MCF 10A (cell line): ENCODE measurements at regions of chr6 and their contacts with region 1.

Region 1: DNA sequence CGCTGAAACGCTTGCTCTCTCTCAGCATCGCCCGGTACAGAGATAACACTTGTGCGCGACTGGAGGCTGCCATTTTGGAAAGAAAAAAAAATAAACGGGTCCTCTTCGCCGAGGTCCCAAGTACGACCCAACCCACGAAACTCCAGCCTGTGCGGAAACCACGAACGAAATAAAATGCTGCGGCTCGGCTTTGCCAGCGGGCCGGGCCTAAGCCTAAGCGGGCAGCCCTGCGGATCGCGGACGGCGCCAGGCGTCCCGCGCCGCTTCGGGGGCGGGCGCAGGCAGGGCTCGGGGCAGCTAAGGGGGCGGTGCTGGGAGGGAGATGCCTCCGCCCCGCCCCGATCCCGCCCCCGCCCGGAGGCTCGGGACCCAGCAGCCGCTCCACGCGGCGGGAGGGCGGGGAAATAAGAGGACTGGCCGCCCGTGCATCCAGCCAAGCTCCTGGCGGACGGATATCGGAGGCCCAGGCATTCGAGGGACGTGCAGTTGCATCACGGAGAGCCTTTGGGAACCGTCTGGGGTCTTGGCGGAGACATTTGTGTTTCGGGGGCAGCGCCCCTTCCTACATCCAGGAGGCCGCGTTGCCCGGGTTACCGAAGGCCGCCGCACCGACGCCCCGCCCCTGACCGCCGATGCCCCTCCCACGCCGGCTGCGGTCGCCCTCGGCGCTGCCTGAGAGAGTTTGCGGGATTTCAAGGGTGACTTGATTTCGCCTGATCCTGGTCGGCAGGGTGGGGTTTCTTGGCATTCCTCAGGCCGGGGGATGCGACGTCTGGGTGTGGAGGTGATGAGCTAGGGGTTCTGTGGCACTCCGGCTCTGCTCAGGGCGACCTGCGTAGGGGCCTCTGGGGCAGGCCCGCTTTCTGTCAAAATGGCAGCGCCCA is at the starts of genes FARS2 and LYRM4:
- DNase-seq: peak; percentile 93
- H3K4me3 Mint-ChIP-seq: peak within 1 kb of the TSS; percentile 81
- H3K27ac Mint-ChIP-seq: peak within 1 kb of the TSS; percentile 99
- H3K4me1 Mint-ChIP-seq: peaks cover 12% of the 10 kb centered on the region
- H3K27me3 Mint-ChIP-seq: no peaks in the 10 kb centered on the region
- CTCF ChIP-seq: no peak
- total RNA-seq, gene FARS2: 13.0 and 18.2 TPM in 2 replicates
- total RNA-seq, gene LYRM4: 31.6 and 36.1 TPM in 2 replicates

Region 2: GRCh38 chr6:4446982-4447381 is 813.9 kb before region 1 on chr6:
- CTCF ChIA-PET with region 1: no interaction called
- POLR2A ChIA-PET with region 1: no interaction called
- intact Hi-C with region 1: no loop called
- DNase-seq: peak; percentile 43
- H3K4me3 Mint-ChIP-seq: no peak overlapping the region
- H3K27ac Mint-ChIP-seq: no peak overlapping the region
- H3K4me1 Mint-ChIP-seq: peaks cover 2% of the 10 kb centered on the region
- H3K27me3 Mint-ChIP-seq: no peaks in the 10 kb centered on the region
- CTCF ChIP-seq: no peak

Region 3: GRCh38 chr6:5190507-5190906 is 70.4 kb before region 1 on chr6:
- CTCF ChIA-PET with region 1: no interaction called
- POLR2A ChIA-PET with region 1: interaction called, 11 read pairs
- intact Hi-C with region 1: no loop called
- DNase-seq: peak; percentile 89
- H3K4me3 Mint-ChIP-seq: no peak overlapping the region
- H3K27ac Mint-ChIP-seq: peak overlapping the region; percentile 27
- H3K4me1 Mint-ChIP-seq: peaks cover 12% of the 10 kb centered on the region
- H3K27me3 Mint-ChIP-seq: no peaks in the 10 kb centered on the region
- CTCF ChIP-seq: no peak

Region 4: DNA sequence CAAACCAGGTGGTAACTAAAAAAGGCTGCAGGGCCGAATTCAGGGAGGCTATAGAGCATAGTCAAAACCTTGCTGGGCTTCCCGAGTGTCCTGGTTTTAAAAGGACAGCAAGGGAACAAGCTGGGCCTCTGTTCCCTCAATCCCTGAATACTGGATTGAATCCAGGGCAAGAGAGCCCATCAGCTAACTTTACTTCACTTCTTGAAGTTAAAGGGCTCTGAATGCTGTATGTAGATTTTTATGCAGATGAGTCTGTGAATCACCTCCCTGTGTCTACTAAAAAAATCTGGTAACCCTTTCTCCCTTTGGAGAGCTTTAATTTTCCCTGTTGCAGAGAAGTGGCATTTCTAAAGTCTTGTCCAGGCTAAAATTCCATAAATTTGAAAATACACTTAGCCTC is 29.6 kb before region 1 on chr6:
- CTCF ChIA-PET with region 1: interaction called, 3 read pairs
- POLR2A ChIA-PET with region 1: interaction called, 21 read pairs
- intact Hi-C with region 1: no loop called
- DNase-seq: no peak
- H3K4me3 Mint-ChIP-seq: no peak overlapping the region
- H3K27ac Mint-ChIP-seq: peak overlapping the region; percentile 79
- H3K4me1 Mint-ChIP-seq: peaks cover 14% of the 10 kb centered on the region
- H3K27me3 Mint-ChIP-seq: no peaks in the 10 kb centered on the region
- CTCF ChIP-seq: no peak